Gastrocnemius medialis (tissue), 4 donors: ENCODE measurements at regions of chr10 and their contacts with region 1.

Region 1: DNA sequence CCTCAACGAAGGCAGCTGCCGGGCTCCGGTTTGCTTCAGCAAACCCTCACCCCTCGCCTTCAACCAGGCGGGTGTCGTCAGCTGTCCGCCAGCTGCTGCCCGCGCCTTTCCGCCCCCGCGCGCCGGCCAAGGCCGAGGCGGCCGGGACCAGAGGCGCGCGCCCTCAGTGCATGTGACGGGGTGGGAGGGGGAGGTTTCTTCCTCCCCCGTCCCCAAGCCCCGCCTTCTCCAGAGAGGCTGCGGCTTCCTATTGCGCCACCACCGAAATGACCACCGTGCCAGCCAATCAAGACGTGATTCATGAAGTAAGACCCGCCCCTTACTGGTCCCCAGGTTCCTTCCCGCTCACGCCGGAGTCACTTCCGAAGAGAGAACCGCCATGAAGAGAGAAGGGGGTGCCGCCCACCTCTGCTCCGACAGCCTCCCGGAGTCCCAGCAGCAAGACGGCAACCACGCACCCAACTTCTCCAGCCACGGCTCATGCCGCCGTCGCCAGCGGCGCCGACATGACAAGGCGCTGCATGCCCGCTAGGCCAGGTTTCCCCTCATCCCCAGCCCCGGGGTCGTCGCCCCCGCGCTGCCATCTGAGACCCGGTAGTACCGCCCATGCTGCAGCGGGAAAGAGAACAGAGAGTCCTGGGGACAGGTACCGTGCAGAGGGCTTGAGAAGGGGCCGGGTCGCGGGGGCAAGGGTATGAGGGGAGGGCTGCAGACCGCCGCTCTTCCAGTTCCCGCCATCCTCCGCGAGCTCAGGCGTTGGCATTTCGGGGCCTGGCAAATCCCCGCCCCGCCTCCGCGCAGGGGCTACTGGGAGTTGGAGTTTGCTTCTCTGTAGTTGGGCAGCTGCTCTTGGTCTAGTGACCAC is at the start of gene SLF2:
- DNase-seq: peak; percentile 98 to 99
- ATAC-seq: peak; percentile 98 to 99
- H3K4me3 ChIP-seq: peak within 1 kb of the TSS; percentile 99 to 100 (median 100)
- H3K27ac ChIP-seq: peak within 1 kb of the TSS; percentile 96 to 99 (median 97)
- H3K4me1 ChIP-seq: peaks cover 31 to 33% of the 10 kb centered on the region in 2 donors
- H3K27me3 ChIP-seq: no peaks in the 10 kb centered on the region
- CTCF ChIP-seq: no peak
- POLR2A ChIP-seq: peak; percentile 92 to 93
- total RNA-seq, gene SLF2: 9.2 to 23.0 (median 20.1) TPM

Region 2: DNA sequence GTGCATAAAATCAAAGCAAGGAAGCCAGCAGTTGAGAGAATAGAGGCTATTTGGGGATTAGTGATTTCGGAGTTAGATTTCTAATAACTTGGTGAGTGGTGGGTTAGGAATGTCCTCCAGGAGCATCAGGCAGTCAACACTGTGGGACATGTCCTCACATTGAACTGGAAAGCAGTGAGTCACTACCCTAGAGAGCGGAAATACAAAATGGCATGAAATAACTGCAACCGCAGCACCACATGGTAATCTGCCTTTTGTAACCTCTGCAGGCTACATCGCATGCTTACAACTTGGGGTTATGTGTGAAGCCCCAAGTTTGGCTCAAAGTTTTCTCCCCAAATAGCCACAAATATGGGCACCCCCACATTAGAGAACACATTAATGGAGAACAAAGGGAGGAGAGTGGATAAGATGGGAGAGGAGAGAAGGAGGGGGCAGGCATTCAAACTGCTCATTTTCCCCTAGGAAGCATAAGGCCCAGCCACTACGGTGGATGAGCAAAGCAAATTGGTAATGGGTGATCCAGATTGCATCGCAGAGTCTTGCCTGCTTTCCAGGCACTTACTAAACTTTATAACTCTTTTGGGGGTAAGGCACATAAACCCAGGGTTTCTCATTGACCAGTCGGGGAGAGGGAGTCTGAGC is 22.0 kb before region 1 on chr10:
- in situ Hi-C with region 1: no loop called
- intact Hi-C with region 1: no loop called
- DNase-seq: peak; percentile 12 to 36
- ATAC-seq: peak; percentile 86 to 90
- H3K4me3 ChIP-seq: no peak overlapping the region
- H3K27ac ChIP-seq: peak overlapping the region in 1 of 4 donors; percentile 37
- H3K4me1 ChIP-seq: peaks cover 0 to 5% of the 10 kb centered on the region in 2 donors
- H3K27me3 ChIP-seq: peaks cover 13 to 30% (median 28%) of the 10 kb centered on the region in 3 donors
- CTCF ChIP-seq: no peak
- POLR2A ChIP-seq: no peak

Region 3: DNA sequence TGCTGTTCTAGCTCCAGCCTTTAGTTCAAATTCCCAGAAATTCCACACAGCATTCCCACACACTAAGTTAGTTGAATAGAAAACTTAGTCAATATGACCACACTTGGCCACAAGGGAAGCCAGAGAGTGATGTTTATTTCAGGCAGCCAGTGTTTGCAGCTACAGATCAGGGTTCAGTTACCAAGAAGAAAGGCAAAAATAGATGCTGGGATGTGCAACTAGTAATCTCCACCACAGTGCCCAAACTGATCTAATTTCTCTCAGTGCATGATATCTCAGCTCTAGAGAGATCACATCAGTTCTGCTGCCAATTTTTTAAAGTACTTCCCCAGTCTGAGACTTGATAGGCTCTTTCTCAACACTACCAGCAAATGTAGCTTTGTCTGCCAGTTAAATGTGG is 17.5 kb after region 1 on chr10:
- in situ Hi-C with region 1: no loop called
- intact Hi-C with region 1: loop called (anchors 2 kb)
- DNase-seq: peak; percentile 4 to 16
- ATAC-seq: peak; percentile 92 to 97
- H3K4me3 ChIP-seq: no peak overlapping the region
- H3K27ac ChIP-seq: peak overlapping the region; percentile 66 to 70 (median 68)
- H3K4me1 ChIP-seq: peaks cover 18 to 19% of the 10 kb centered on the region in 2 donors
- H3K27me3 ChIP-seq: no peaks in the 10 kb centered on the region
- CTCF ChIP-seq: peak in 4 of 5 experiments; percentile 13 to 41 (median 15)
- POLR2A ChIP-seq: no peak

Region 4: GRCh38 chr10:100998991-100999741 is 86.3 kb after region 1 on chr10:
- in situ Hi-C with region 1: no loop called
- intact Hi-C with region 1: loop called (anchors 2 kb)
- DNase-seq: peak; percentile 61 to 78
- ATAC-seq: peak; percentile 58 to 59
- H3K4me3 ChIP-seq: peak overlapping the region; percentile 65 to 97 (median 86)
- H3K27ac ChIP-seq: peak overlapping the region; percentile 95 to 100 (median 98)
- H3K4me1 ChIP-seq: peaks cover 31 to 49% of the 10 kb centered on the region in 2 donors
- H3K27me3 ChIP-seq: no peaks in the 10 kb centered on the region
- CTCF ChIP-seq: peak; percentile 90 to 100 (median 99)
- POLR2A ChIP-seq: peak; percentile 92 to 95